Head of caudate nucleus (tissue), 42 donors: ENCODE measurements at regions of chr2 and their contacts with region 1.

Region 1: GRCh38 chr2:55175254-55176025 is 56.7 kb downstream of the CLHC1 start:
- DNase-seq: peak in 1 of 42 donors; percentile 31

Region 2: GRCh38 chr2:54899576-54900200 is 275.8 kb before region 1 on chr2:
- intact Hi-C with region 1: loop called (anchors 1 kb)
- DNase-seq: peak in 26 of 42 donors; percentile 13 to 80 (median 54)